ENCODE measurements at regions of chr2 and their contacts with region 1.

Region 1: DNA sequence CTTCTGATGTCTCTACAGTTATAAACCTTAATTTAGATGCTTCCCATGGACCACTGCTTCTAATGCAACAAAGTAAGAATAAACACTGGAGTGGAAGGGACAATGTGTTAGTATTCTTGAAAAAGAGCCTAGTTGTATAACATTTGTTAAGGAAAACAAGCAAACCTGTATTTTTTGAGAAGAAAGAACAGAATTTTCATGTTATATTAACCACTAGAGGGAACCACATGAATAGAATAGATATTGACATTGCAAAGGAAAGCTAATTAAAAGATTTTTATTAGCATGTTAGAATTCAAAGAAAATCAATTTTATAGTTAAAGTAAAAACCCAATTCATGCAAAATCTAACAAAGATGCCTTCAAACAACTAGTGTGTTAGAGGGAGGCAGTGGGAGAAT is 151.2 kb upstream of the BARD1 start:
- DNase-seq: no peak
- H3K4me3 Mint-ChIP-seq: no peak overlapping the region
- H3K27ac Mint-ChIP-seq: no peak overlapping the region
- H3K4me1 Mint-ChIP-seq: no peaks in the 10 kb centered on the region
- H3K27me3 Mint-ChIP-seq: peaks cover 6% of the 10 kb centered on the region

Region 2: GRCh38 chr2:214982879-214983278 is 22.2 kb after region 1 on chr2:
- CTCF ChIA-PET with region 1: no interaction called
- intact Hi-C with region 1: no loop called
- DNase-seq: no peak
- H3K4me3 Mint-ChIP-seq: no peak overlapping the region
- H3K27ac Mint-ChIP-seq: no peak overlapping the region
- H3K4me1 Mint-ChIP-seq: no peaks in the 10 kb centered on the region
- H3K27me3 Mint-ChIP-seq: peaks cover 9% of the 10 kb centered on the region

Region 3: DNA sequence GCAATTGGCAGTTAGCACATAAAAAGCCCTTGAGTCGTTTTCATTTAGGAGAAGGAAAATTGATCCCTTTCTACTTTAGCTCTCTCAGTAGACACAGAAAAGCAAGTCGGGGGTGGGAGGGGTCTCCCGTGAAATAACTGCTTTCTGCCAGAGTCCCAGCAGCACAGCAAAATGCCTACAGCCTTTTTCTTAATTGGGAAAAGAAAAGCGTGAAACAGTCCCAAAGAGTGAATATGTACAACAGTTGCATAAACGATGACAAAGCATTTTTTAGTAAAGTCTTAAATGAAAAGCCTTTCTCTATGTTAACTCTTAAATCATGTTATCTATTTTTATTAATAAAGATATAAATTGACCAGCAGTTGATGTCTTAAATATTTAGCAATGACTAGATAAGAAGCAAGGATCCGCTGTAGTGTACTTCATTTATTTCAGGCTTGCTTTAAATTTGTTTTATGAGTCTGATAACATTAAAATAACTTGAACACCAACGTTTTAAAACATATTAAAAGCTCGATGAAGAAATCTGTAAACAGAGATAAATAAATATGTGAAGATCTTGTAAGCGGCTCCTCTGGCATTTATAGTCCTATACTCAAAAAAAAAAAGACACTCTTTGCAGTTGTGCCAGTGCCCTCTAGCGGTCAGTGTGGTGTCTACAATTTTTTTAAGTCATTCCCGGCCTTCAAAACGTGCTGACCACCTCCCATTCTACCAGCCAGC is 308.9 kb after region 1 on chr2:
- CTCF ChIA-PET with region 1: interaction called, 5 read pairs
- intact Hi-C with region 1: loop called (anchors 5 kb)
- DNase-seq: peak; percentile 69
- H3K4me3 Mint-ChIP-seq: no peak overlapping the region
- H3K27ac Mint-ChIP-seq: no peak overlapping the region
- H3K4me1 Mint-ChIP-seq: peaks cover 3% of the 10 kb centered on the region
- H3K27me3 Mint-ChIP-seq: no peaks in the 10 kb centered on the region